Head of caudate nucleus (tissue), 42 donors: ENCODE measurements at regions of chr2 and their contacts with region 1.

Region 1: GRCh38 chr2:190408538-190409271 is 550 bp downstream of the MFSD6 start:
- DNase-seq: peak; percentile 44 to 93 (median 84)

Region 2: DNA sequence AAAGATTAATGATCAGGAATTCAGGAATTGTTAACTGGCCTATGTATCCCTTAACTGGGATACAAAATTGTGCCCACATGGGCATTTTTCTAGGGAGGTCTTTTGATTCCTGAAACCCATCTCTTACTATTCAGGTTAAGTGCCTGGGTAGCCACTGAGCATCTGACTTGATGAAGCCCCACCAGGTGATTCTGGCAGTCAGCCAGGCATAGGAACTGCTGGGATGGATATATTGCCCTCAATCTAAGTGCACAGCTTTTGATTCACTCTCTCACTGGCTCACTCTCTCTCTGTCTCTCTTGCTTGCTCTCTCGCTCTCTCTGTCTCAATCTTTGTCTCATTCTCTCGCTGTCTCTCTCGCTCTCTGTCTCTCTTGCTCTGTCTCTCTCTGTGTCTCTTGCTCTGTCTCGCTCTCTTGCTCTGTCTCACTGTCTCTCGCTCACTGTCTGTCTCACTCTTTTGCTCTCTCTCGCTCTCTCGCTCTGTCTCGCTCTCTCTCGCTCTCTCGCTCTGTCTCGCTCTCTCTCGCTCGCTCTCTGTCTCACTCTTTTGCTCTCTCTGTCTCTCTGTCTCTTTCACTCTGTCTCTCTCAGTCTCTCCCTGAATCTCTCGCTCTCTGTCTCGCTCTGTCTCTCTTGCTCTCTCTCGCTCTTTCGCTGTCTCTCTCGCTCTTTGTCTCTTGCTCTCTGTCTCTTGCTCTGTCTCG is 43.1 kb before region 1 on chr2:
- intact Hi-C with region 1: loop called (anchors 5 kb)
- DNase-seq: no peak

Region 3: DNA sequence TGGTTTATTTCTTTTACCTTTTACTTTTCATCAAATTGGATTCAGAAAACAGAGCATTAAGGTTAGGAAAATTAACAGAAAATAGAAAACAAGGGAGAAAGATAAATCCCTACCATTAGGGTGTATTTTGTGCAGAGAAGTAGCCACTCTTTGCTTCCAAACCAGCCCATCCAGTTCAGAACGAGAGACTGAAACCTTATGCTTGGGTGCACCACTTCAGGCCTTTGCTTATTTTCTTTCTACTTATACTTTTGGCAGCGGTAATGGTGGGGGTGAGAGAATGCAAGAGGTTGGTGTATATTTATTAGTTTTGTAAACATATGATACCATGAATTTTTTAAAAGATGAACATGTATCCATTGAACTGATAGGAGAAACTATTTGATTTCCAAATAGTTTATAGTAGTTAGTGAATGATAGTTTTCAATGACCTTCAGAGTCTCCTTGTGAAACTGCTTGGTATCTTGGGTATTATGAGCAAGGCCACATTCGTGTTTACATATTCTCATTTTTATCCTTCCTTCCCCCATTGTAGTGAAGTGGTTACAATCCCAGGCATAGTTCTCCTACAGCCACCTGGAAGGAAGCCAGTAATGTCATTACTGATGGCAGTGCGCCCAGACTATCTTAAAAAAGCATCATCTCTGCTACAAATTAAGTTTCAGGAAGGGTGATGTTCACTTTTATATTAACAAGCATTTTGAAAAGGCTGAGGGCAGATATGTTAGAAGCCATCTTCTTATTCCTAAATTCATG is 60.3 kb after region 1 on chr2:
- intact Hi-C with region 1: loop called (anchors 10 kb)
- DNase-seq: peak in 31 of 42 donors; percentile 21 to 82 (median 50)

Region 4: GRCh38 chr2:190511104-190511503 is 102.4 kb after region 1 on chr2:
- intact Hi-C with region 1: loop called (anchors 10 kb)
- DNase-seq: peak in 5 of 42 donors; percentile 47 to 68 (median 51)